Sigmoid colon (tissue), 7 donors: ENCODE measurements at regions of chr7 and their contacts with region 1.

Region 1: GRCh38 chr7:116271963-116272839 is 61.9 kb downstream of the TES start:
- DNase-seq: peak; percentile 90
- H3K4me3 ChIP-seq: peak overlapping the region in 2 of 4 donors; percentile 11 to 16
- H3K27ac ChIP-seq: peak overlapping the region; percentile 79 to 91 (median 85)
- H3K4me1 ChIP-seq: peaks cover 0 to 77% (median 48%) of the 10 kb centered on the region in 4 donors
- H3K27me3 ChIP-seq: no peaks in the 10 kb centered on the region
- CTCF ChIP-seq: no peak
- EP300 ChIP-seq: peak; percentile 84 to 96 (median 94)
- POLR2A ChIP-seq: no peak

Region 2: GRCh38 chr7:116311816-116312471 is 39.7 kb after region 1 on chr7:
- intact Hi-C with region 1: loop called (anchors 5 kb)
- DNase-seq: no peak
- H3K4me3 ChIP-seq: no peak overlapping the region
- H3K27ac ChIP-seq: no peak overlapping the region
- H3K4me1 ChIP-seq: peaks cover 0 to 18% (median 13%) of the 10 kb centered on the region in 4 donors
- H3K27me3 ChIP-seq: no peaks in the 10 kb centered on the region
- CTCF ChIP-seq: no peak
- EP300 ChIP-seq: no peak
- POLR2A ChIP-seq: no peak

Region 3: GRCh38 chr7:116438267-116438666 is 166.1 kb after region 1 on chr7:
- intact Hi-C with region 1: loop called (anchors 5 kb)
- DNase-seq: no peak
- H3K4me3 ChIP-seq: no peak overlapping the region
- H3K27ac ChIP-seq: peak overlapping the region in 2 of 4 donors; percentile 1 to 6
- H3K4me1 ChIP-seq: peaks cover 0 to 32% (median 18%) of the 10 kb centered on the region in 4 donors
- H3K27me3 ChIP-seq: no peaks in the 10 kb centered on the region
- CTCF ChIP-seq: no peak
- EP300 ChIP-seq: no peak
- POLR2A ChIP-seq: no peak

Region 4: GRCh38 chr7:116525913-116526861 is 254.0 kb after region 1 on chr7:
- intact Hi-C with region 1: loop called (anchors 2 kb)
- DNase-seq: peak; percentile 93
- H3K4me3 ChIP-seq: peak overlapping the region; percentile 69 to 89 (median 80)
- H3K27ac ChIP-seq: peak overlapping the region; percentile 94 to 99 (median 98)
- H3K4me1 ChIP-seq: peaks cover 0 to 40% (median 24%) of the 10 kb centered on the region in 4 donors
- H3K27me3 ChIP-seq: no peaks in the 10 kb centered on the region
- CTCF ChIP-seq: peak in 3 of 4 experiments; percentile 14 to 88 (median 42)
- EP300 ChIP-seq: no peak
- POLR2A ChIP-seq: peak in 1 of 2 donors; percentile 63

Region 5: GRCh38 chr7:116653204-116653603 is 381.0 kb after region 1 on chr7:
- intact Hi-C with region 1: no loop called
- DNase-seq: no peak
- H3K4me3 ChIP-seq: no peak overlapping the region
- H3K27ac ChIP-seq: peak overlapping the region in 3 of 4 donors; percentile 19 to 49 (median 42)
- H3K4me1 ChIP-seq: peaks cover 0 to 10% (median 9%) of the 10 kb centered on the region in 4 donors
- H3K27me3 ChIP-seq: no peaks in the 10 kb centered on the region
- CTCF ChIP-seq: no peak
- EP300 ChIP-seq: no peak
- POLR2A ChIP-seq: no peak